Calu3 (cell line): ENCODE measurements at regions of chr3 and their contacts with region 1.

Region 1: GRCh38 chr3:46705022-46705530 is 3.9 kb downstream of the TMIE start:
- DNase-seq: peak; percentile 73
- H3K4me3 Mint-ChIP-seq: no peak overlapping the region
- H3K27ac Mint-ChIP-seq: no peak overlapping the region
- H3K4me1 Mint-ChIP-seq: peaks cover 17% of the 10 kb centered on the region
- H3K27me3 Mint-ChIP-seq: peaks cover 15% of the 10 kb centered on the region
- CTCF ChIP-seq: peak; percentile 88

Region 2: GRCh38 chr3:46154311-46154710 is 550.8 kb before region 1 on chr3:
- CTCF ChIA-PET with region 1: no interaction called
- intact Hi-C with region 1: no loop called
- DNase-seq: no peak
- H3K4me3 Mint-ChIP-seq: no peak overlapping the region
- H3K27ac Mint-ChIP-seq: no peak overlapping the region
- H3K4me1 Mint-ChIP-seq: no peaks in the 10 kb centered on the region
- H3K27me3 Mint-ChIP-seq: no peaks in the 10 kb centered on the region
- CTCF ChIP-seq: no peak

Region 3: DNA sequence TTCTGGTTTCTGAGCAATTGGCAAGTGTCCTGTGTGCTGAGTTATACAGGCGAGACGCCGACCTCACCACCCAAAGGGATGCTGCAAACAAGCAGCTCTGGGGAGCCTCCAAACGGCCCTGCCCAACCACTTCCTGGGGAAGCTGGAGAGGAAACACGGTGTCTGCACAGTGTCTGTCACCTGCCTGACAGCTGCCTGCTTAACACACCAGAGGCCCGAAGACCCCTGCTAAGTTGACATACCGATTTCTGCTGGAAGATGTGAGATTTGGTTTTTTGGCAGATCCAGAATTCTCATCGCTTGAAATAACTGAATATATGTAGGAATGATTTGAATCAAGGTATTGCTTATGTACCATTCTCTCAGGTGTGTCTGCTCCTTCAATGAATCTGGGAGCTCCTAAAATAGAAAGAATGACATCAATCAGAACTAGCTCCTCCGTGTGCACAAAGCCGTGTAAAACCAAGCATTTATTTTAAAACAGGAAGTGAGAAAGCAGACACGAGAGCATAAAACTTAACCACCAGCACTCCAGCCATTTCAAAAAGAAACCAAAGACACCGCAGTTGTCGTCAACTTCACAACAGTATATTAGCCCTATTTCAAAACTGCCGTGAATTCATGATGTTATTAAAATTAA is 166.2 kb before region 1 on chr3:
- CTCF ChIA-PET with region 1: no interaction called
- intact Hi-C with region 1: no loop called
- DNase-seq: no peak
- H3K4me3 Mint-ChIP-seq: no peak overlapping the region
- H3K27ac Mint-ChIP-seq: no peak overlapping the region
- H3K4me1 Mint-ChIP-seq: peaks cover 10% of the 10 kb centered on the region
- H3K27me3 Mint-ChIP-seq: no peaks in the 10 kb centered on the region
- CTCF ChIP-seq: no peak

Region 4: GRCh38 chr3:46558184-46559043 is 146.7 kb before region 1 on chr3:
- CTCF ChIA-PET with region 1: no interaction called
- intact Hi-C with region 1: no loop called
- DNase-seq: peak; percentile 91
- H3K4me3 Mint-ChIP-seq: peak overlapping the region; percentile 80
- H3K27ac Mint-ChIP-seq: peak overlapping the region; percentile 51
- H3K4me1 Mint-ChIP-seq: peaks cover 23% of the 10 kb centered on the region
- H3K27me3 Mint-ChIP-seq: no peaks in the 10 kb centered on the region
- CTCF ChIP-seq: peak; percentile 53

Region 5: GRCh38 chr3:46736006-46736872 is 31.2 kb after region 1 on chr3:
- CTCF ChIA-PET with region 1: no interaction called
- intact Hi-C with region 1: no loop called
- DNase-seq: no peak
- H3K4me3 Mint-ChIP-seq: no peak overlapping the region
- H3K27ac Mint-ChIP-seq: no peak overlapping the region
- H3K4me1 Mint-ChIP-seq: no peaks in the 10 kb centered on the region
- H3K27me3 Mint-ChIP-seq: peaks cover 57% of the 10 kb centered on the region
- CTCF ChIP-seq: no peak

Region 6: DNA sequence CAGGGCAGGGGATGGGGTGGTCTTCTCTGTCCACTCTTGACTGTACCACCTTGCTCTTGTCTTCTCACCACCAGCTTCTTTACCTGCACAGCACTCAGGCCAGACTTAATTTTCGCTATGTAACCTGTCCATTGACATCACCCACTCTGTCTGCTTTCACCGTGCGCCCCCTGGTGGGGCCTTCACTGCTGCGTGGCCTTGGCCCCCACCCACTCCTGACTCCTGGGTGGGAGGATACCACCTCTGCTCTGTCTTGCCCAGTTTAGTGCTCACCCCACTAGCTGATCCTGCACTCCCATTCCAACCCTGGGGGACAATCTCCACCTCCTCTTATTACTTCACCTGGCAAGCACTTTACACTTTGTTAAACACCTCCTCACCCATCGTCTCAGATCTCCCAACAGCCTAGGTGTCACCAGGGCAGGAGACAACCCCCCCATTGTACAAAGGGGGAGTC is 190.2 kb after region 1 on chr3:
- CTCF ChIA-PET with region 1: interaction called, 16 read pairs
- intact Hi-C with region 1: loop called (anchors 1 kb)
- DNase-seq: peak; percentile 81
- H3K4me3 Mint-ChIP-seq: no peak overlapping the region
- H3K27ac Mint-ChIP-seq: no peak overlapping the region
- H3K4me1 Mint-ChIP-seq: peaks cover 26% of the 10 kb centered on the region
- H3K27me3 Mint-ChIP-seq: peaks cover 37% of the 10 kb centered on the region
- CTCF ChIP-seq: peak; percentile 89

Region 7: DNA sequence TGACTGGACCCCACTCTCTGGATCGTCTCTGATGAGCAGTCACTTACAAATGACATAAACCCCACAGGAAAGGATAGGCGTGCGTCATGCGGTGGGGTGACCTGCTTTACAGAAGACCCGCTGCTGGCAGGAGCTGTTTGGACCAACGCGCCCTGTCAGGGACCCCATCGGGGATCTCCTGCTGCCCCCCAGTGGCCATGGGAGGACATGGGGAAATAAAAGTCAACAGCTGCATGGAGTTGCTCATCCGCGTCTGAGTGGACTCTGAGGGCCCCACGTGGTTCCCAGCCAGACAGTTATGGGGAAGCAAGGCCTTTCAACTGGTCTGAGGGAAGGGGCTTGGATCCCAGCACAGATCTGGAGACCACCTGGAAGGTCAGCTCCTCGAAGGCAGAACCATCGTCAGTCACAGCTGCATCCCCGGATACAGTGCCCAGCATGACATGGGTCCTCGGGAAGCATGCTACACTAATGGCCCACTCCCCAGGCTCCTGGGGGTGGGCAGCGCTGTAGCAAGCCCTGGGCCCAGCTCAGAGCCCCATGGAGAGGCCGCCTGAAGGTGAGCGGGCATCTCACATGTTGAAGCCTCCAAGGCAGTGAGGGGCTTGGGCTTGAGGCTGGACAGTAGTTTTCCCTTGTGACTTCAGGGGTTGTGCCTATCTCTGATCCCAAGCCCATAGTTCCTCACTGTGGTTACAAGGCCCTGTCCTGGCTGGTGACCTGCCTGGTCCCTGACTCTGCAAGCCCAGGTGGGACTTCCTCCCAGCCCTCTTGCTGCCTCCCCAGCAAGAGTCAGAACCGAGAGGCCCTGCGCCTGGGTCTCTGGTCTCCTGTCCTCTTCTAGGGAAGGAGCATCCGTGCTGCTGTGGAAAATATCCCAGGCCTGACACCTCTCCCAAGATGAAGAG is 204.7 kb after region 1 on chr3:
- CTCF ChIA-PET with region 1: interaction called, 7 read pairs
- intact Hi-C with region 1: loop called (anchors 1 kb)
- DNase-seq: peak; percentile 86
- H3K4me3 Mint-ChIP-seq: no peak overlapping the region
- H3K27ac Mint-ChIP-seq: no peak overlapping the region
- H3K4me1 Mint-ChIP-seq: peaks cover 9% of the 10 kb centered on the region
- H3K27me3 Mint-ChIP-seq: no peaks in the 10 kb centered on the region
- CTCF ChIP-seq: peak; percentile 70

Region 8: DNA sequence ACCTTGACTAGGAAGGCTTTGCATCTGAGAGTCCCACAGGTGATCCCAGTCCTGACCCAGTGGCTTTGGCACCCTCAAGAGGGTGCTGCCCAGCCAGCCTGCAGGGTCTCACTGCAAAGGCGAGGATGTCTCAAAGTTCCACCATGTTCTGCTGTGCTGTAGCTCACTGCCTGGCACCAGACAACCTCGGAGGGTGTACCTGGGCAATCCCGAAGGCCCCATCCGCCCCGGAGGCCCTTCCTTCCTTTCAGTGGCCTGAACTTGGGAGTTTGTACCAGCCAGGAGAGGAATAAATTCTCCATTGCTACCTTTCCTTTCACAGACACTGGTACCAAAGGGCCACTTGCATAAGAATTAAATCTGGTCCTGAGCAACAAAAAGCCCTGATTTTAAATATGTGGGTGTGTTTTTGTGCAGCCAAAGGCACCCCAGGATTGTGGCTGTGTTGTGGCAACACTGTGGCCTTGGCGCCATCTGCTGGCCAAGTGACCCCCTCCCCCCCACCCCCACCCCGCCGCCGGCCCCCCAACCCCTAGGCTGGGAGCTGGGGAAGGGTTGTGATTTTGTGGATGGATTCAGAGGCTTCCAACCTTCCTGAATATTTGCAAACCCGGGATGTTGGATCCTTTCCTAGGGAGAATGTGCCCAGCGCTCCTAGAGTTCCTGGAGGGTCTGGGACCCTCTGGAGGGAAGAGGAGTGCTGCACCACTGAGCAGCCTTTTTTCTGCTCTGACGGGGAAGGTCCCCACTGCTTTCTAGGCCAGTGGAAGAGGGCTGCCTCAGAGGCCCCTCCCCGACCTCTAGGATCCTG is 666.0 kb after region 1 on chr3:
- CTCF ChIA-PET with region 1: no interaction called
- intact Hi-C with region 1: loop called (anchors 5 kb)
- DNase-seq: no peak
- H3K4me3 Mint-ChIP-seq: no peak overlapping the region
- H3K27ac Mint-ChIP-seq: no peak overlapping the region
- H3K4me1 Mint-ChIP-seq: no peaks in the 10 kb centered on the region
- H3K27me3 Mint-ChIP-seq: no peaks in the 10 kb centered on the region
- CTCF ChIP-seq: peak; percentile 54